OCI-LY7 (cell line): ENCODE measurements at regions of chr10 and their contacts with region 1.

Region 1: DNA sequence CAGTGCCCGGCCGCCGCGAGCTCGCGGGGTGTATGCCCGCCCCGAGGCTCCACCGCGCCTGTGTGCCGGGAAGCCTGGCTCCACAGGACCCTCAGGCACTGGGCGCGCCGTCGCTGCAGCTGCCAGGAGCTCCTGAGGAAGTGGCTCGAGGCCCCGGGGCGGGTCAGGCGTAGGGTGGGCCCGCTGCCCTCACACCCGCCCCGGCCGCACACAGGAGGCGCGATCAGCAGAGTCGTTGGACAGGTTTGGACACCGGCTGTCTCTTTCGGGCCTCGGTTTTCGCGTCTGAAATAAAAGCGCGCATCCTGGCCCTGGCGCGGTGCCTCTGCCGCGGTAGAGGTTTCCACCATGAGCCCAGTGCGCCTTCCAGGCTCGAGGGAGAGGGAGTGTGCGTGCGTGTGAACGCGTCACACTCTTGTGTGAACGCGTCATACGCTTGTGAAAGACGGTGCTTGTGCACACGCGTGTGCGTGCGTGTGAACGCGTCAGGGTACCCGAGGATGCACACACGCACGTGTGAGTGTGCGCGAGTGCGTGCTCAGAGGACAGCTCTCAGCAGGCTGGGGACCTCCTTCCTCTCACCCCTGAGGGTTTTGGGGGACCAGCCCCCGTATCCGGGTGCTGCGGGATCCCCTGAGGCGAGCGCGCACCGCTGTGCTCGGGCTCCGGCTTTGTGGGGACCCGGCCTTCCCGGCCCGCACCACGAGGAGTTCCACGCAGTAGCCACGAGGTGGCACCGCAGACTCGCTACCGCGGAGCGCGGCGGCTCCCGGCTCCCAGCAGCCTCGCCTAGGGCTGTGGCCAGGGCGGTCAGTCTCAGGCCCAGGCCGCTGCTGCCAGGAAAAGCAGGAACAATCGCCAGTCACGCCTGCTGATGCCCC is 83.8 kb downstream of the BMS1 start:
- DNase-seq: peak; percentile 66
- H3K4me3 ChIP-seq: no peak overlapping the region
- H3K27ac ChIP-seq: no peak overlapping the region
- H3K4me1 ChIP-seq: peaks cover 4% of the 10 kb centered on the region
- CTCF ChIP-seq: peak; percentile 74

Region 2: DNA sequence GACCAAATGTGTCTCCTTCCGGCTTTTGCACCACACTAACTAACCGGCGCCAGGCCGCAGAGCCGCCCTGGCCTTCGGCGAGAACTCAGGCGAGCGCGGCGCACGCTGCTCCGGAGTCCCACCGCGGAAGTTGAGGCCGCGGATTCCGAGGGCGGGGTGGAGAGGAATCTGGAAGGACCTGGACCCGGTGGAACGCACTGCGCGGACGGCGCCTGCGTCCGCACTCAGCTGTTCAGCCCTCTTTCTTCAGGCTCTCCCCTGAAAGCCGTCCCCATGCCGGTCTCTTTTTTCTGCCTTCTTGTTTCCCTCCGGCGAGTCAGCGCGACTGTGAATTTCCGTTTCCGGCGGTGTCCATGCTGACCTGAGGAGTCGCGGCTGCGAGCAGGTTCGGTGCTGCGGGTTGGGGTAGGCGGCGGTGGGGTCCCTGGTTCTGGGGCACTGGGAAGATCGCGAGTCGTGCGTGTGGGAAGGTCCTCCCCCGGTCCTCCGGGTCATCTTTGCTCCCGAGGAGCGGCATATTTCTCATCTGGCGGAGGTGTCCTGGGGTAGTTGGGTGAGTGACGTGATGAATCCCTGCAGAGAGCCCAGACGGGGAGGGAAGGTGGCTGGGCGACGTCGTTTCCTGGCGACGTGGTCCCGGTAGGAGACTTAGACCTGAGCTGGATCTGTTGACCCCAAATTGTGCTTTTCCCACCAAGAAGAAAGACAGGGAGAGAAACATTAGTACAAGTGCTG is 83.7 kb before region 1 on chr10 and contains the start of gene BMS1:
- CTCF ChIA-PET with region 1: no interaction called
- POLR2A ChIA-PET with region 1: no interaction called
- intact Hi-C with region 1: no loop called
- DNase-seq: peak; percentile 91
- H3K4me3 ChIP-seq: peak within 1 kb of the TSS; percentile 90
- H3K27ac ChIP-seq: peak within 1 kb of the TSS; percentile 40
- H3K4me1 ChIP-seq: peaks cover 21% of the 10 kb centered on the region
- CTCF ChIP-seq: no peak
- total RNA-seq, gene BMS1: 14.9 and 17.3 TPM in 2 replicates

Region 3: GRCh38 chr10:43093423-43094076 is 227.2 kb after region 1 on chr10:
- CTCF ChIA-PET with region 1: no interaction called
- POLR2A ChIA-PET with region 1: no interaction called
- intact Hi-C with region 1: loop called (anchors 5 kb)
- DNase-seq: no peak
- H3K4me3 ChIP-seq: no peak overlapping the region
- H3K27ac ChIP-seq: no peak overlapping the region
- H3K4me1 ChIP-seq: peaks cover 18% of the 10 kb centered on the region
- CTCF ChIP-seq: no peak

Region 4: GRCh38 chr10:43105102-43105785 is 238.9 kb after region 1 on chr10:
- CTCF ChIA-PET with region 1: no interaction called
- POLR2A ChIA-PET with region 1: no interaction called
- intact Hi-C with region 1: loop called (anchors 1 kb)
- DNase-seq: peak; percentile 73
- H3K4me3 ChIP-seq: peak overlapping the region; percentile 60
- H3K27ac ChIP-seq: no peak overlapping the region
- H3K4me1 ChIP-seq: peaks cover 11% of the 10 kb centered on the region
- CTCF ChIP-seq: peak; percentile 93

Region 5: GRCh38 chr10:43348511-43349312 is 482.4 kb after region 1 on chr10:
- CTCF ChIA-PET with region 1: no interaction called
- POLR2A ChIA-PET with region 1: no interaction called
- intact Hi-C with region 1: loop called (anchors 5 kb)
- DNase-seq: peak; percentile 88
- H3K4me3 ChIP-seq: no peak overlapping the region
- H3K27ac ChIP-seq: no peak overlapping the region
- H3K4me1 ChIP-seq: peaks cover 8% of the 10 kb centered on the region
- CTCF ChIP-seq: peak; percentile 98

Region 6: GRCh38 chr10:43461950-43462349 is 595.6 kb after region 1 on chr10:
- CTCF ChIA-PET with region 1: no interaction called
- POLR2A ChIA-PET with region 1: no interaction called
- intact Hi-C with region 1: loop called (anchors 5 kb)
- DNase-seq: peak; percentile 87
- H3K4me3 ChIP-seq: no peak overlapping the region
- H3K27ac ChIP-seq: no peak overlapping the region
- H3K4me1 ChIP-seq: no peaks in the 10 kb centered on the region
- CTCF ChIP-seq: peak; percentile 91